ENCODE measurements at regions of chr1 and their contacts with region 1.

Region 1: DNA sequence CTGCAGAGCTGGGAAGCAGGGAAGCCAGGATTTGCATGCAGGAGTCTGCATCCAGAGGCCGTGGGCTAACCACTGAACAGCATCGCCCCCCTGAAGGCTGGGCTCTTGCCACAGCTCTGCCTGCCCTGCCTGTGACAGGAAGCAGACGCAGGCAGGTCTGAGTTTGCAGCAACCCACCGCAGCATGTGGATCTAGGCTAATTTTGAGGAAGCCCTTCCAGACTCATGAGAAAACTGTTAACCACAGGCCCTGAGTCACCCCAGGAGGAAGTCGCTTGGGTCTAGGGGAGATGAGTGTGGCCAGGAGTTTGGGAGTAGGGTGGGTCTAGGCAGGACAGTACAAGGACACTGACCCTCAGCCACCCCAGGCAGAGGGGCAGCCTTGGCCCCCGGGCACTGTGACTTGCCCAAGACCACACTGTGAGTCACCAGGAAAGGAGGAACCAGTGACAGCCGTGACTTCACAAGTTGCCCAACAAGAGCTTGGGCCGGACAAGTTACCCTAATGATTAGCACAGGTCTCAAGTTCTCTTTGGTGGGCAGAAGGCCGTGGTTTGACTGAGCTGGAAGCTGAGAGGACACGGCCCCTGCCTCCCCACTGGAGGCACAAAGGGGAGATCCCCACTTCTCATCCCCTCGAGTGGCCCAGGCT is 904 bp downstream of the LAPTM5 start:
- DNase-seq: peak; percentile 92
- ATAC-seq: peak; percentile 69
- H3K4me3 Mint-ChIP-seq: peak overlapping the region; percentile 98
- H3K27ac Mint-ChIP-seq: peak overlapping the region; percentile 95
- H3K4me1 Mint-ChIP-seq: peaks cover 82% of the 10 kb centered on the region
- H3K27me3 Mint-ChIP-seq: no peaks in the 10 kb centered on the region

Region 2: DNA sequence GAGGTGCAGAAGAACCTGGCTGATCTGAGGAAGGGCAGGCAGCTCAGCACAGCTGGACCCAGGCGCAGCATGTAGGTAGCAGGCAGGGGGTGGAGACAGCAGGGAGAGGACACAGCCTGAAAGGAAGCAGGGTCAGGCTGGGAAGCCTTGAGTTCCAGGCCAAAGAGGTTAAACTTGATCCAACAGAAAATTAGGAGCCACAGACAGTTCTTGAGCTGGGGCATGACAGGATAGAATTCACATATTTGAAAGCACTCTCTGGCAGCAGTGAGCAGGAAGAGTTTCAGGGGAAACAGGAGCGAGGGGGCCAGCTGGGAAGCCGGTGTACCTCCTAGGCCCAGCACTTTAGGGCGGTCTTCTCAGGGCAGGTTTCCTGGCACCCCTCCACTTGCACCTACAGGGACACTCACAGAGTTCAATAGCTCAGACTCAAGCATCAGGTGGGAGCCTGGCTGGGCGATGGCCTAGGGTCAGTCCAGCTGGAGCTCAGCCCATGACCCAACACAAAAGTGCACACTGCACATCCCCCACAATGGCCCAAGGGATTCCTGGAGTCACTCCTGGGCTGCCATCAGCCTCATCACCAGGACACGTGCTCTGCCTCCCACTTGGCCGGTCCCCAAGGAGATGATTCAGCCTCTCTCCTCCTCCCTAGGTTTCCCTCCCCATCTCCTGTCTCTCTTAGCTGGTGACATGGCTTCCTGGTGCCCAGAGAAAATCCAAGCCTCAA is 56.0 kb before region 1 on chr1:
- CTCF ChIA-PET with region 1: no interaction called
- DNase-seq: no peak
- ATAC-seq: no peak
- H3K4me3 Mint-ChIP-seq: no peak overlapping the region
- H3K27ac Mint-ChIP-seq: no peak overlapping the region
- H3K4me1 Mint-ChIP-seq: no peaks in the 10 kb centered on the region
- H3K27me3 Mint-ChIP-seq: peaks cover 2% of the 10 kb centered on the region

Region 3: GRCh38 chr1:30743584-30744059 is 13.0 kb before region 1 on chr1:
- CTCF ChIA-PET with region 1: interaction called, 200 read pairs
- DNase-seq: peak; percentile 89
- ATAC-seq: peak; percentile 81
- H3K4me3 Mint-ChIP-seq: peak overlapping the region; percentile 64
- H3K27ac Mint-ChIP-seq: peak overlapping the region; percentile 96
- H3K4me1 Mint-ChIP-seq: peaks cover 98% of the 10 kb centered on the region
- H3K27me3 Mint-ChIP-seq: no peaks in the 10 kb centered on the region